Posterior vena cava (tissue), 2 donors: ENCODE measurements at regions of chr14 and their contacts with region 1.

Region 1: GRCh38 chr14:26088260-26088659 is 509.6 kb downstream of the NOVA1 start:
- DNase-seq: no peak

Region 2: DNA sequence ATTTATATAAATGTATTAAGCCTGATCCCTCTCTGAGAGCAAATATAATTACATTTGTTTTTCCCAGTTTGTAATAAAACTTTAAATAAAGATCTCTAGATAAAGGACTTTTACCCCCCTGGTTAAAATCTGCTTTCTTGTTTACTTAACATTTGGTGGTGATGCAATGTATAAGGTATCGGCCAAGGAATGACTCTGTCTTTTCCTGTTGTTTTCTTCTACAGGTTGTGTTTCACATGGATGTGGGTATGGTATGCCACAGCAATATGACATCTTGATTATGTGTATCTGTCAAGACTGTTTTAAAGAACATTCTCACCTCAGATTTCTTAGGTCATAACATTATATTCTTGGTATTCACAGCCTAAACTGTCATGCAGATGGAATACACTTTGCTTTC is 720.1 kb after region 1 on chr14:
- intact Hi-C with region 1: loop called in 1 of 2 experiments (anchors 5 kb)
- DNase-seq: no peak